Left lung (tissue), 14 donors: ENCODE measurements at regions of chr18 and their contacts with region 1.

Region 1: GRCh38 chr18:25230658-25231326 is 121.2 kb downstream of the ZNF521 start:
- DNase-seq: peak in 3 of 4 donors; percentile 72 to 90 (median 77)
- ATAC-seq: peak; percentile 93
- H3K4me3 ChIP-seq: no peak overlapping the region
- H3K27ac ChIP-seq: peak overlapping the region; percentile 55 to 74
- H3K4me1 ChIP-seq: peaks cover 23 to 40% of the 10 kb centered on the region in 2 donors
- H3K27me3 ChIP-seq: no peaks in the 10 kb centered on the region
- CTCF ChIP-seq: no peak

Region 2: GRCh38 chr18:25349131-25349925 is 118.5 kb after region 1 on chr18:
- intact Hi-C with region 1: loop called in 1 of 2 experiments (anchors 10 kb)
- DNase-seq: peak in 3 of 4 donors; percentile 44 to 81 (median 60)
- ATAC-seq: peak; percentile 9
- H3K4me3 ChIP-seq: peak overlapping the region; percentile 49 to 63
- H3K27ac ChIP-seq: peak overlapping the region; percentile 78 to 87
- H3K4me1 ChIP-seq: peaks cover 0 to 25% of the 10 kb centered on the region in 2 donors
- H3K27me3 ChIP-seq: peaks cover 6 to 77% of the 10 kb centered on the region in 2 donors
- CTCF ChIP-seq: no peak

Region 3: GRCh38 chr18:25435149-25435782 is 204.5 kb after region 1 on chr18:
- intact Hi-C with region 1: no loop called
- DNase-seq: no peak
- ATAC-seq: no peak
- H3K4me3 ChIP-seq: no peak overlapping the region
- H3K27ac ChIP-seq: no peak overlapping the region
- H3K4me1 ChIP-seq: no peaks in the 10 kb centered on the region
- H3K27me3 ChIP-seq: no peaks in the 10 kb centered on the region
- CTCF ChIP-seq: no peak